ENCODE measurements at regions of chr9 and their contacts with region 1.

Region 1: DNA sequence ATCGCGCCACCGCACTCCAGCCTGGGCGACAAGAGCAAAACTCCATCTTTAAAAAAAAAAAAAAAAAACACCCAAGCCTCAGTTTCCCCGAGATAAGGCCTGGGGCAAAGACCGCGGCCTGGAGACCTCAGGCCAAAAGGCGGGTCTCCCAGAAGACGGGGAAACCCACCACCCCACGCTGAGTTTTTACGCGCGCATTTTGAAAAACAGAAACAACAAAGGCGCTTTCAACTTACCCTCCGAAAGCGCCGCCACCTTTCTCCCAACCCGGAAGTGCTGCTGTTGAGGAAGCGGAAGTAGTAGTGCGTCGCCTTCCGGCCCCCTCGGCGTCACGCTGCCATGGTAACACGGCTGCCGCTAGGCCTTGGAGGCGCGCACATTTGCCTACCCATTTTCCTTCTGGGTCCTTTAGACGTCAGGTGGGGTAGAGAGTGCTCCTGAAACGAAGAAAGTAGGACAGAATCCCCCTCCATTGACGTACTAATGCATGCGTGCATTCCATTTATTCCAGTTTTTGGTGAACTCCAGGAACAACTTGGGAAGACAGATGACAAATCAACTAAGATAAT is at the start of gene TTF1:
- DNase-seq: peak; percentile 82 to 87
- H3K4me3 ChIP-seq: peak within 1 kb of the TSS; percentile 60
- H3K27ac ChIP-seq: no peak within 1 kb of the TSS
- H3K4me1 ChIP-seq: peaks cover 12% of the 10 kb centered on the region; the same call in 1 of the 2 replicates
- H3K27me3 ChIP-seq: peaks cover 22% of the 10 kb centered on the region
- CTCF ChIP-seq: no peak
- total RNA-seq, gene TTF1: 16.0 and 18.5 TPM in 2 replicates

Region 2: DNA sequence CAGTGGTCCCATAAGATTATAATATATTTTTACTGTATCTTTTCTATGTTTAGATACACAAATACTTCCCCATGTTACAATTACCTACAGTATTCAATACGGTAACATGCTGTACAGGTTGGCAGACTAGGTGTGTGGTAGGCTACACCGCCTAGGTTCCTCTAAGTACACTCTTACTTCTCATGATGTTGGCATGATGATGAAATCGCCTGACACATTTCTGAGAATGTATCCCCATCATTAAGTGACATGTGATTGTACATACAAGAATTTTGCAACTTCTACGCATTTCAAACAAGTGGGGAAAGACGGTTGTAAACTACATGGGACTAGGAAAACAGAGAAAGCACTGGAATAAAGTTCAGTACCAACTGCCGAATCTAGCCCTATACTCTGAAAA is 105.1 kb before region 1 on chr9:
- CTCF ChIA-PET with region 1: no interaction called
- POLR2A ChIA-PET with region 1: no interaction called
- intact Hi-C with region 1: no loop called
- DNase-seq: no peak
- H3K4me3 ChIP-seq: no peak overlapping the region
- H3K27ac ChIP-seq: no peak overlapping the region
- H3K4me1 ChIP-seq: no peaks in the 10 kb centered on the region
- H3K27me3 ChIP-seq: no peaks in the 10 kb centered on the region
- CTCF ChIP-seq: no peak

Region 3: DNA sequence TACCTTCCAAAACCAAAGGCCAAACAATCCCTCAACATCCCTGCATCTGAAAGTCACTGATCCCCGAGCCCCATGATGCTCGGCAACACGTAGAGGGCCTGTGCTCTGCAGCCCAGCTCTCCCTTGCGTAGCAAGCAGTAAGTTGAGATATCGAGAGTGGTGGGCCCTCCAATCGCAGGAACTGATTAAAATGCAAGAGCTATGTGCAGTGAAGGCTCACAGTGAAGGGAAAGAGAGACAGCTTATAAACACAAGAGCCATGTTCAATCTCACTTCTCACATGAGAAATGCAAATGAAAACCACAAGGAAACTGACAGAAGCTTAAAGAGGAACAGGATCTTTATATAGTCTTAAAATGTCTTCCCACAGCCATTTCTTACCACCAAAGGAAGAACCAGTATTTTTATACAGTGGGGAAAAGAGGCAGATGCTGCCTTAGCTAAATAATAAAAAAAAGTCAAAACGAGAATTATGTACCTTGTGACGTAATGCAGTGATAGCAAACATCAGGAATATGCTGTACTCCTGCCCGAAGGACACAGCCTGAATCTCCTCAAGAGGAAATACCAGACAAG is 24.6 kb before region 1 on chr9:
- CTCF ChIA-PET with region 1: no interaction called
- POLR2A ChIA-PET with region 1: no interaction called
- intact Hi-C with region 1: no loop called
- DNase-seq: no peak
- H3K4me3 ChIP-seq: no peak overlapping the region
- H3K27ac ChIP-seq: no peak overlapping the region
- H3K4me1 ChIP-seq: no peaks in the 10 kb centered on the region
- H3K27me3 ChIP-seq: no peaks in the 10 kb centered on the region
- CTCF ChIP-seq: no peak

Region 4: GRCh38 chr9:132507746-132508469 is 101.3 kb after region 1 on chr9:
- CTCF ChIA-PET with region 1: no interaction called
- POLR2A ChIA-PET with region 1: no interaction called
- intact Hi-C with region 1: loop called (anchors 2 kb)
- DNase-seq: peak in 1 of 2 experiments; percentile 67
- H3K4me3 ChIP-seq: no peak overlapping the region
- H3K27ac ChIP-seq: no peak overlapping the region
- H3K4me1 ChIP-seq: no peaks in the 10 kb centered on the region
- H3K27me3 ChIP-seq: peaks cover 85% of the 10 kb centered on the region
- CTCF ChIP-seq: peak; percentile 87

Region 5: DNA sequence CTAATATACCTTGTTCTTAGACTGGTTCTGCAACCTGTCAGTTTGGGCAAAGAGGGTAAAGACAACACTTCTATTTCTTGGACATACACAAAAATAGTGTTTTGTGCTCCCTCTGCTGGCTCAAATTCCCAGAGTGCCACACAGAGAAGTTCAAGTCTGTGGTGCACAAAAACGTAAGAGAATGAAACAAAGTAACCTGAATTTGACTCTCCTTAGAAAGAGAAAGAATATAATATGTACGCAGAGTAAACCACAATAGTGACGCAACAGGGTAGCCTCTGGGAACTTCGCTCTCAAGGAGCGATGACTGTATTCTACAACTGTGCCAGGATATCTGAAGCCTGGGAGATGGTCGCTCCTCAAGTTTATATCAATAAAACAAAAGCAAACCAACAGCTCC is 244.6 kb after region 1 on chr9:
- CTCF ChIA-PET with region 1: no interaction called
- POLR2A ChIA-PET with region 1: no interaction called
- intact Hi-C with region 1: loop called (anchors 1 kb)
- DNase-seq: peak; percentile 45 to 71
- H3K4me3 ChIP-seq: no peak overlapping the region
- H3K27ac ChIP-seq: no peak overlapping the region
- H3K4me1 ChIP-seq: 0 out of 2 replicates have a peak, but pooled peaks cover 5% of the 10 kb centered on the region
- H3K27me3 ChIP-seq: no peaks in the 10 kb centered on the region
- CTCF ChIP-seq: peak; percentile 64; the same call in 1 of the 2 replicates

Region 6: DNA sequence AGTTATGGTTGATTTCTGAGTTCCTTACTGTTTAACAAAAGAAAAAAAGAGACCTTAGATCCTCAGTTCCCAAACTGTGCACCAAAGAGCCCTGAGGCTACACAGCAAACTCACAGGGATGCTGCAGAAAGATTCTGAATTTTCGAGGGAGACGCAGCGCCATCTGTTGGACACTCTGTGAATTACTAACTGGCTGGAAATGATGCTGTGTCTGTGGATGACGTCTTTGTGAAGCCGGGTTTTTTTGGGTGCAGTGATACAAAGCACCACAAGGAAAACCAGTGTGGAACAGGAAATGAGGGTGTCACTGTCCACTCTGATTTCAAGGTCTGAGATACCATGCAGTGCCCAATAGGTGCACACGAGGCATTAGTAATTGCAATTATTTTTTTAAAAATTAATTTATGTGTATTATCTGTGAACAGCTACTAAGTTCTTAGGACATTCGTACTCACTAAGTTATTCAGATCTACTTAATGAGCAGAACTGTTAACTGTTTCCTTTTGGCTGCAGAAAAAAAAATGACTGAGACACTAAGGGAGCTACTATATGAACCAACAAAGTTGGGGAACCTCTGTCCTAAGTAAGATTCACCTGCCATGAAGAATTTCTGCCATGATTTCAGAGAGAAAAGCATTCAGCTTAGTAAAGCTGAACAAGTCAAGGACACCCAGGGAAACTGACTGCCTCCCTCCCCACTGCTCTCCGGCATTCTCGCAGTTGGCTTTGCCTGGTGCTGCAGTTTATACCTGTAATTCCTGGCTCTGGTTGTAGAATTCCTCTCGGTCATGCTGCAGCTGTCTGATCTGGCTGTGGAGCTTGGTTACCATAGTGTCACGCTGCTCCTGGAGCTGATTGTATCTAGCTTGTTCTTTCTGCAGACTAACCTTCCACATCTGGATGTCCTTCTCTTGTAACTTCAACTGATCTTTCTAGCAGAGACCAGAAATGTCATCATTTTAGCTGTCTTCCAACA is 495.5 kb after region 1 on chr9:
- CTCF ChIA-PET with region 1: no interaction called
- POLR2A ChIA-PET with region 1: no interaction called
- intact Hi-C with region 1: loop called (anchors 10 kb)
- DNase-seq: peak; percentile 69 to 78
- H3K4me3 ChIP-seq: no peak overlapping the region
- H3K27ac ChIP-seq: no peak overlapping the region
- H3K4me1 ChIP-seq: no peaks in the 10 kb centered on the region
- H3K27me3 ChIP-seq: no peaks in the 10 kb centered on the region
- CTCF ChIP-seq: peak; percentile 94

Region 7: DNA sequence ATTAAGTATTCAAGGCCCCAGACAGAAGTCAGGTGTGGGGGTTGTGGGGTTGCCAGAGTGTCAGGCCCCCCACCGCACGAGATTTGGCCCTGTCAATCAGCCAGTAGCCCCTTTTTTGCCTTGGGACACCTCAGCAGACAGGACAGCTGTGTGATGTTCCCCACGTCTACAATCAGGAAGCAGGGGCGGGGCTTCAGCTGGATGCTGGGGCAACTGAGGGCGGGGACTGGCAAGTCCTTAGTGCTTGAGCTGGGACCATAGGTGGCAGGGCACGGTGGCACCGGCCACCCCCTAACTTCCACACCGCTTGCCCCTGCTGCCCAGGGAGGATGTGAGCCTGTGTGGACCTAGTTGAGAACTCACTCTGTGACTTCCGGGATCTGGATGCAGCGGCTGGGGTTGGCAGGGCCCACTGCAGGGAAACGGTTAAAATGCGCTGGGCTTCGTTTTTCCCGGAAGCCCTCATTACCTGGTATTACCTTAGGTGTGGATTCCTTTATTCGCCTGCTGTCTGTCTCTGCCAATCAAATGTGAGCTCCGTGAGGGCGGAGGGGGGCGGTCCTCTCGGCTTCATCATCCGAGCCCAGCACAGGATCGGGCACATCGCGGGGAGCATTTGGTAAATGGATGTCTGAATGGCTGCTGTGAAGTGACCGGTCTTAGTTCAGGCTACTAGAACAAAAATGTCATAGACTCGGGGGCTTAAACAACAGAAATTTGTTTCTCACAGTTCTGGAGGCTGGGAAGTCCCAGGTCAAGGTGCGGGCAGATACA is 616.7 kb after region 1 on chr9:
- CTCF ChIA-PET with region 1: interaction called, 9 read pairs
- POLR2A ChIA-PET with region 1: no interaction called
- intact Hi-C with region 1: loop called (anchors 1 kb)
- DNase-seq: peak in 1 of 2 experiments; percentile 12
- H3K4me3 ChIP-seq: no peak overlapping the region
- H3K27ac ChIP-seq: no peak overlapping the region
- H3K4me1 ChIP-seq: no peaks in the 10 kb centered on the region
- H3K27me3 ChIP-seq: peaks cover 8% of the 10 kb centered on the region
- CTCF ChIP-seq: no peak

Measured in PC-9 (cell line).